Caco-2 (cell line): ENCODE measurements at regions of chr7 and their contacts with region 1.

Region 1: GRCh38 chr7:42400967-42401366 is 164.0 kb upstream of the GLI3 start:
- DNase-seq: no peak
- H3K4me3 ChIP-seq: no peak overlapping the region
- H3K4me3 Mint-ChIP-seq: no peak overlapping the region
- H3K27ac Mint-ChIP-seq: no peak overlapping the region
- H3K4me1 ChIP-seq: no peaks in the 10 kb centered on the region
- H3K4me1 Mint-ChIP-seq: no peaks in the 10 kb centered on the region
- H3K27me3 ChIP-seq: no peaks in the 10 kb centered on the region
- H3K27me3 Mint-ChIP-seq: peaks cover 10% of the 10 kb centered on the region
- CTCF ChIP-seq: no peak

Region 2: DNA sequence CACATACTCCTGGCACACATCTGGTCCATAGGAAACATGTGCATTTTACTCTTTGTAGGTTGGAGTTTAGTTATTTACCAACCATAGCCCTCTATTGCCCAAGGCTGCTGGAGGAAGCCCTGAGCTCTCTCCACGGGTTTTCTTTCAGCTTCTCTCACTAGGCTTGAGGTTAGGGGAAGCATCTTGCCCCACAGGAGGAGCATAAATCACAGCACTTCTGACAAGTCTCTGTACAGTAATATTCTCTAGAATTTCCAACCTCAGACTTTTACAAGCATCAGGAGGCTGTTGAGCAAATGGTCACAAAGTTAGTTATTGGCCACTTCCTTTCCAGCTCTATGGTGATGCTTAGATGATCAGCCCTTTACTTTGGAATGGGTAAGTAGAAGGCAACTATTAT is 41.0 kb before region 1 on chr7:
- CTCF ChIA-PET with region 1: no interaction called
- POLR2A ChIA-PET with region 1: no interaction called
- intact Hi-C with region 1: loop called (anchors 1 kb)
- DNase-seq: no peak
- H3K4me3 ChIP-seq: no peak overlapping the region
- H3K4me3 Mint-ChIP-seq: no peak overlapping the region
- H3K27ac Mint-ChIP-seq: no peak overlapping the region
- H3K4me1 ChIP-seq: no peaks in the 10 kb centered on the region
- H3K4me1 Mint-ChIP-seq: no peaks in the 10 kb centered on the region
- H3K27me3 ChIP-seq: no peaks in the 10 kb centered on the region
- H3K27me3 Mint-ChIP-seq: no peaks in the 10 kb centered on the region
- CTCF ChIP-seq: no peak

Region 3: GRCh38 chr7:42502022-42502421 is 101.1 kb after region 1 on chr7:
- CTCF ChIA-PET with region 1: no interaction called
- POLR2A ChIA-PET with region 1: no interaction called
- intact Hi-C with region 1: no loop called
- DNase-seq: no peak
- H3K4me3 ChIP-seq: no peak overlapping the region
- H3K4me3 Mint-ChIP-seq: no peak overlapping the region
- H3K27ac Mint-ChIP-seq: no peak overlapping the region
- H3K4me1 ChIP-seq: no peaks in the 10 kb centered on the region
- H3K4me1 Mint-ChIP-seq: no peaks in the 10 kb centered on the region
- H3K27me3 ChIP-seq: no peaks in the 10 kb centered on the region
- H3K27me3 Mint-ChIP-seq: no peaks in the 10 kb centered on the region
- CTCF ChIP-seq: no peak